Activated CD4-positive, alpha-beta T cell treated with anti-CD3 and anti-CD28 coated beads, Interleukin-2, amount 10 ng/mL, durations not matched to agents 24 days and 14 days (primary cell): ENCODE measurements at regions of chr3 and their contacts with region 1.

Region 1: DNA sequence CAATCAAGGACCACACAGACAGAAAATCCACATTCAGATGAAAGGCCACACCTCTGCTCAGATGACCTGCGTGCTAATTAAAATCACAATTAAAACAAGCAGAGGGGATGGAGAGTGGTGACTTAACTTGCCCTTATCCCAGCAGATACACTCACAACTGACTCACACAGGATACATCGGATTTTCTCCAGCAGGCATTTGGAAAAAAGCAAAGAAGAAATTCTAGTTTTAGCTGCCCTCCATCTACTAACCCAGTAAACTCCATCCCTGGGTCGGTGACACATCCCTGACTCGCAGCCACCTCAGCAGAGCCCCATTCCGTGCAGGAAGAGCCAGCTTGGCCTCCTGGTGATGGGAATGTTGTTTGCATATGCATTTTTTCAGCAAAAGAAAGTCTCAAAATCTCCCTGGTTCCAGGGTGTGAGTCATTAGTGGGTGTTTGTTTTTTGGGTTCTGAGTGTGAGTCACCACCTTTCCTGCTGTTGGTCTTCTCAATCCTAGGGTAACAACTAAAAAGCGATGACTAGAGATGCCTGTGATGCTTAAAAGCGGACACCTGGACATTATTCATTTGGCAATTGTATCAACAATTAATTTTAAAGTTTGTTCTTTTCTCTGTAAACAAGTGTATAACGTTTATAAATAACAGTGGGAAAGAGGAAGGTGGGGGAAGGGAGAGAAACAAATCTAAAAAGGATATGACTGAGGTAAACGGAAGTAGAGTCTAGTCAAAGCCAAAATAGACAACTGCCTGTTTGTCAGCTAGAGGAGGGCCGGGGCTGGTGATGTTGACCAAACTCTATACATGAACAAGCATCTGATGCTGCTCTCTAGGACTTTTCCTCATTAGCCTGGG is 49.8 kb upstream of the SLC4A7 start:
- DNase-seq: peak; percentile 74
- H3K4me3 Mint-ChIP-seq: peak overlapping the region; percentile 61
- H3K27ac Mint-ChIP-seq: peak overlapping the region; percentile 84
- H3K4me1 Mint-ChIP-seq: peaks cover 21% of the 10 kb centered on the region
- H3K27me3 Mint-ChIP-seq: no peaks in the 10 kb centered on the region

Region 2: DNA sequence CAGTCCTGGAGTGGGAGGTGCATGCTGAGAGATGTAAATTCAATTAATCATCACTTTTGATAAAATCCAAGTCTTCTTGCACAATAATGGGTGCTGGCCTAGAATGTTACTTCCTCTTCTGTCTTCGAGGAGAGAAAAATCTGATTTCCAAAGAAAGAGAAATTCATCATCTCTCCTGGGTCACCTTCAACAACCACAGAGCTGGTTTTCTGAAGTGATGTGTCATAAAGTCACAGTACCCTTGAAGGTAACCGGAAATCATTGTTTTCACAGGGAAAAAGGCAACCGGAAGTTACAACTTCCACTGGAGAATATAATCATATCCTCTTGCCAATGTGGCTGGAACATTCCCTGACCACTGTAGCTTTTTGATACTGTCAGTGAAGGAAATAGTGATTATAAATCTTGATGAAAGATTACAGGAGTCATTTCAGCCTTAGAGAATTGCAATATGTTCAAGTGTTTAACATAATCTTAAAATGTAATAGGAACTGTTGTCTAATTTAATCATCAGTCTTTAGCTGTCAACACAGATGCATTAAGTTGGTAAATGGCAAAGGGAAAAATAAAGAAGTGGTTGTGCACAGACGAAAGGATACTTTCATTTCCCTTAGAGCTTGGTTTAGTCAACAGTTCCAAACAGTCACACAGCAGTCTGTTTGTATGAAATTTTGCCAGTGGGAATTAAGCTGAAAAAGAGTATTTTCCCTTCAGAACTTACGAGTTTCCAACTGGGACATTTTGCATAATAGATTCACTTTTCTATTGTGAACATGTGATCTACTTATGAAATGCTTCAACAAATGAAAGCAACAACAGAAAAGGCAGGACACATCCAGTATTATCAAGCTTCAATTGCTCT is 56.7 kb after region 1 on chr3:
- intact Hi-C with region 1: loop called (anchors 1 kb)
- DNase-seq: peak; percentile 65
- H3K4me3 Mint-ChIP-seq: peak overlapping the region; percentile 55
- H3K27ac Mint-ChIP-seq: peak overlapping the region; percentile 85
- H3K4me1 Mint-ChIP-seq: peaks cover 28% of the 10 kb centered on the region
- H3K27me3 Mint-ChIP-seq: no peaks in the 10 kb centered on the region